IMR-90 (cell line): ENCODE measurements at regions of chr16 and their contacts with region 1.

Region 1: GRCh38 chr16:86072328-86073102 is 173.6 kb downstream of the IRF8 start:
- DNase-seq: peak; percentile 86
- ATAC-seq: peak; percentile 73
- H3K4me3 ChIP-seq: no peak overlapping the region
- H3K27ac ChIP-seq: 0 out of 2 replicates have a peak overlapping the region, but pooled peaks have one; percentile 1
- H3K4me1 ChIP-seq: peaks cover 17% of the 10 kb centered on the region
- H3K27me3 ChIP-seq: no peaks in the 10 kb centered on the region
- CTCF ChIP-seq: peak; percentile 90
- POLR2A ChIP-seq: 0 out of 2 replicates have a peak, but pooled peaks have one; percentile 24
- RAD21 ChIP-seq: peak; percentile 97

Region 2: DNA sequence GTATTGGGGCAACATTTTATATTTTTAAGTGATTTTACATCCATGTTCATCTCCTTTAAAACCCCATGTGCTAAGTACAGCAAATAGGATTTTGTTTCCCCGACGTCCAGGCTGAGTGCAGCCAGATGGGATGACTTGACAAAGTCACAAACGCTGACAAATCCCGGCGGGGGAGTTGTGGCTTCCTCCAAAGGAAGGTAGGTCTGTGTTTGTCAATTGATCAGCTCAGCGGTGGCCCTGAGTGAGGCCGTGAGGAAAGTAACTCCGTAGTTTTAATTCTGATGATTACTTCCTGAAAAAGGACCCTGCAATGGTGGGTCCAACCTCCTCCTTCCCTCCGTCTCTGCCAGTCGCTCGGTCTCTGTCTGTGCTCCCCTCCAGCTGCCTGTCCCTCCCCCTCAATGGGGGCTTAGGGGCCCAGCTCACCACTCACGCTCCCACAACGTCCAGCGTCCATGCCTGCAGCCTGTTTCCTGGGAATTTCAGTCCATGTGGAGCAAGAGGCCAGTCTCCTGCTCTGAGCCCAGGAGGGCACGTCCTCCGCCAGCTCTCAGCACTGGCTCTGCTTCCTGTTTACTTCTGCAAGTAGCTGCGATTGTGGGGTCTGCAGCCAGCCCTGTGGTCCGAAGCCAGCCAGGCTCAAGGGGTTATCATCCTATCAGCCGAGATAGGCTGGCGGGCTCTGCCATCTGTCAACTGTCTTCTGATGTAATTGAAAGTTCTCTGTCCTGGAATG is 228.4 kb after region 1 on chr16:
- CTCF ChIA-PET with region 1: interaction called, 12 read pairs
- POLR2A ChIA-PET with region 1: no interaction called
- dilution Hi-C with region 1: no loop called
- in situ Hi-C with region 1: loop called (anchors 5 kb)
- intact Hi-C with region 1: loop called (anchors 2 kb)
- DNase-seq: peak; percentile 85
- ATAC-seq: peak; percentile 16
- H3K4me3 ChIP-seq: peak overlapping the region; percentile 21
- H3K27ac ChIP-seq: peak overlapping the region; percentile 97
- H3K4me1 ChIP-seq: peaks cover 65% of the 10 kb centered on the region
- H3K27me3 ChIP-seq: no peaks in the 10 kb centered on the region
- CTCF ChIP-seq: no peak
- POLR2A ChIP-seq: peak; percentile 49; the same call in 1 of the 2 replicates
- RAD21 ChIP-seq: no peak

Region 3: DNA sequence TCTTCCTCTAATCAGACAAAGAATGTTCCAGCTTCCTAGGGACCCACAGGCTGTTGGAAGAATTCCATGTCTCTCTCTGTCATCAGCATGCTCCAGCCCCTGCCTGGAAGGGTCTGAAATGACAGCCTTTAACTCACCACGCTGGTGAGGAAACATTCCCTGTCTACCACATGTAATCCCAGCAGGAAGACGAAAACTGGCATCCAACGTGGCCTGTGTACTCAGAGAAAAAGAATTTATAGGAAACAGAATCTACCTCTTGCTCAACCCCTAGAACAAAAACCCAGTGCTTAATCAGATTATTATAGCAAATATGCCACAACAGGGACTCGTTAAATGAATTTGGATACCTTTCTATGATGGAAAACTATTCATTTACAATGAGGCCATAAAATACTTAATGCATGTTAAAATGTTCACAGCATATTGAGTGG is 290.6 kb after region 1 on chr16:
- CTCF ChIA-PET with region 1: interaction called, 3 read pairs
- POLR2A ChIA-PET with region 1: no interaction called
- dilution Hi-C with region 1: no loop called
- in situ Hi-C with region 1: no loop called
- intact Hi-C with region 1: loop called (anchors 10 kb)
- DNase-seq: peak; percentile 98
- ATAC-seq: peak; percentile 81
- H3K4me3 ChIP-seq: no peak overlapping the region
- H3K27ac ChIP-seq: peak overlapping the region; percentile 81
- H3K4me1 ChIP-seq: peaks cover 30% of the 10 kb centered on the region
- H3K27me3 ChIP-seq: no peaks in the 10 kb centered on the region
- CTCF ChIP-seq: 0 out of 2 replicates have a peak, but pooled peaks have one; percentile 11
- POLR2A ChIP-seq: no peak
- RAD21 ChIP-seq: peak; percentile 39

Region 4: DNA sequence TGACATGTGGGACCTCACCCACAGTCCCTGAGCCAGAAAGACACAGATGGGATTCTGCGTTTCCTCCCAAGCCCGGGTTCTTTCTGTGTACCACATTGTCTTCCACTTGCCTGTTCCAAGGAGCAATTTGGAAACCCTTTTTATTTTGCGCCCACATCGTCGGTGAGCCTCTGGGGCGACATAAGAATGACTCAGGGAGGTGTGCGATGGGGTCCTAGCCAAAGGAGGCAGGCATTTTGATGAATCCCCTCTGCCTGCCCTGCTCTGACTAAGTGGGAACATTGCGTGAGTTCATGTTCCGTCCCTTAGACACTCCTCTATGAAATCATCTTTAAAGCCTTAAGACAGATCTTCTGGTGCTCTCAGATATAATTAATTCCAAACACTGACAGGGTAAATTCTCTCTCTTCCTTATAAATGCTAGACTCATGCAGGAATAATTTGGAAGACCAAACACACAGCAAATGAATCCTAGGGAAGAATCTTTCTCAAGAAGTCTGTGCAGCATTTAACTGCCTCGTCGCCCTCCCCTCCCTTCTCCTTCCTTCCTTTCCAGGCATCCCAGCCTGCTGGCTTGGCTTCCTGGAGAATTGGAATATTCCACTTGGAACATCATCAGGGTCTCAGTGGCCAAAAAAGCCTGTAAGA is 385.1 kb after region 1 on chr16:
- CTCF ChIA-PET with region 1: interaction called, 5 read pairs
- POLR2A ChIA-PET with region 1: no interaction called
- dilution Hi-C with region 1: no loop called
- in situ Hi-C with region 1: no loop called
- intact Hi-C with region 1: loop called (anchors 5 kb)
- DNase-seq: peak; percentile 99
- ATAC-seq: peak; percentile 61
- H3K4me3 ChIP-seq: no peak overlapping the region
- H3K27ac ChIP-seq: peak overlapping the region; percentile 97
- H3K4me1 ChIP-seq: peaks cover 28% of the 10 kb centered on the region
- H3K27me3 ChIP-seq: no peaks in the 10 kb centered on the region
- CTCF ChIP-seq: no peak
- POLR2A ChIP-seq: peak; percentile 72
- RAD21 ChIP-seq: no peak; the same call in 1 of the 2 replicates